ENCODE measurements at regions of chr12 and their contacts with region 1.

Region 1: GRCh38 chr12:95820102-95820703 is 29.6 kb upstream of the NTN4 start:
- DNase-seq: peak in 1 of 2 experiments; percentile 57
- H3K4me3 ChIP-seq: no peak overlapping the region
- H3K4me3 Mint-ChIP-seq: no peak overlapping the region
- H3K27ac Mint-ChIP-seq: no peak overlapping the region
- H3K4me1 ChIP-seq: no peaks in the 10 kb centered on the region; the same call in 1 of the 2 replicates
- H3K4me1 Mint-ChIP-seq: no peaks in the 10 kb centered on the region
- H3K27me3 ChIP-seq: no peaks in the 10 kb centered on the region
- H3K27me3 Mint-ChIP-seq: no peaks in the 10 kb centered on the region
- CTCF ChIP-seq: peak; percentile 32 to 61

Region 2: GRCh38 chr12:95623585-95624042 is 196.6 kb before region 1 on chr12:
- CTCF ChIA-PET with region 1: no interaction called
- POLR2A ChIA-PET with region 1: no interaction called
- intact Hi-C with region 1: loop called (anchors 1 kb)
- DNase-seq: peak; percentile 78
- H3K4me3 ChIP-seq: no peak overlapping the region
- H3K4me3 Mint-ChIP-seq: no peak overlapping the region
- H3K27ac Mint-ChIP-seq: peak overlapping the region; percentile 53
- H3K4me1 ChIP-seq: peaks cover 13% of the 10 kb centered on the region; the same call in 1 of the 2 replicates
- H3K4me1 Mint-ChIP-seq: no peaks in the 10 kb centered on the region
- H3K27me3 ChIP-seq: no peaks in the 10 kb centered on the region
- H3K27me3 Mint-ChIP-seq: no peaks in the 10 kb centered on the region
- CTCF ChIP-seq: peak; percentile 61 to 76

Region 3: DNA sequence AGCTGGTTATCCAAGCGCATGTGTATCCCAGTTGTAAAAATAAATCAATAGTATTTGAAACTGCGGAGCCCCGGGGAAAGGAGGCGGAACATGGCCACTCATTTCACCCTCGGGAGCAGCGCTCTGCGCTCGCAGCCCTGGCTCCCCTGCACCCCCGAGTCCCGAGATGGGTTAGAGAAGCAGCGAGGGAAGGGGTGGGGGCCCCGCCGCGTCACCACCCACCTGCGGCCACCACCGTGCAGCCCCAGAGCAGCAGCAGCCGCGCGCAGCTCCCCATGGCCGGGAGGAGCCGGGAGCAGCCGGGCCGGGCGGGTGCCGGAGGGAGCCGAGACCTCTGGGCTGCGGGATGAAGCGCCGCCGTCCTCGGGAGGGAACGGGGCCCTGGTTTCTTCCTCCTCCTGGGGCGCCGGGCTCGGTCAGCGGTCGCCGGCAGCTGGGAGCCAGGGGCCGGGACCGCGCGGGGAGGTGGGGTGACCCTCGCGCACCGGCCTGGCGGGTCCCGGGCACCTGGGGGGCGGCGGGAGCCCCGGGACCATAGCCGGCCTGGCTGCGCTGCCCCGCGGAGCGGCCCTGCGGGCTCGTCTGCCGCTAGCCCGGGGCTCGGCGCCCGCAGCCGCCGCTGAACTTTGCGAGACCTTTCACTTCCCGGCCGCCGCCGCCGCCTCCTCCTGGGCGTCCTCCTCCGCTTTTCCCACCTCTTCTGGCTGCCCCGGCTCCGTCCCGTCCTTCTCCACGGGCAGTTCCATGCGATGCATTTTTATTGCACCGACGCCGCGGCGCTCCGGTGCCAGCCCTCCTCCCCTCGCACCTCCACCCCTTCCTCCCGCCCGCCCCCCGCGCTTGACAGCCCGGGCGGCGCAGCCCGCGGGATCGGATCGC is 29.9 kb before region 1 on chr12 and contains the start of gene NTN4:
- CTCF ChIA-PET with region 1: no interaction called
- POLR2A ChIA-PET with region 1: no interaction called
- intact Hi-C with region 1: loop called (anchors 2 kb)
- DNase-seq: peak; percentile 58
- H3K4me3 ChIP-seq: peak within 1 kb of the TSS; percentile 89
- H3K4me3 Mint-ChIP-seq: peak within 1 kb of the TSS; percentile 97
- H3K27ac Mint-ChIP-seq: peak within 1 kb of the TSS; percentile 88
- H3K4me1 ChIP-seq: peaks cover 52% of the 10 kb centered on the region
- H3K4me1 Mint-ChIP-seq: peaks cover 5% of the 10 kb centered on the region
- H3K27me3 ChIP-seq: no peaks in the 10 kb centered on the region
- H3K27me3 Mint-ChIP-seq: no peaks in the 10 kb centered on the region
- CTCF ChIP-seq: no peak
- total RNA-seq, gene NTN4: 54.1 and 55.0 TPM in 2 replicates

Region 4: GRCh38 chr12:95959107-95959506 is 138.9 kb after region 1 on chr12:
- CTCF ChIA-PET with region 1: no interaction called
- POLR2A ChIA-PET with region 1: no interaction called
- intact Hi-C with region 1: loop called (anchors 1 kb)
- DNase-seq: peak in 1 of 2 experiments; percentile 28
- H3K4me3 ChIP-seq: no peak overlapping the region
- H3K4me3 Mint-ChIP-seq: no peak overlapping the region
- H3K27ac Mint-ChIP-seq: no peak overlapping the region
- H3K4me1 ChIP-seq: no peaks in the 10 kb centered on the region
- H3K4me1 Mint-ChIP-seq: no peaks in the 10 kb centered on the region
- H3K27me3 ChIP-seq: no peaks in the 10 kb centered on the region
- H3K27me3 Mint-ChIP-seq: peaks cover 5% of the 10 kb centered on the region
- CTCF ChIP-seq: peak; percentile 15 to 33